Posterior cingulate gyrus (tissue), 11 donors: ENCODE measurements at regions of chr13 and their contacts with region 1.

Region 1: GRCh38 chr13:41310963-41311606 is at the start of gene NAA16:
- DNase-seq: peak; percentile 88 to 98 (median 90)

Region 2: DNA sequence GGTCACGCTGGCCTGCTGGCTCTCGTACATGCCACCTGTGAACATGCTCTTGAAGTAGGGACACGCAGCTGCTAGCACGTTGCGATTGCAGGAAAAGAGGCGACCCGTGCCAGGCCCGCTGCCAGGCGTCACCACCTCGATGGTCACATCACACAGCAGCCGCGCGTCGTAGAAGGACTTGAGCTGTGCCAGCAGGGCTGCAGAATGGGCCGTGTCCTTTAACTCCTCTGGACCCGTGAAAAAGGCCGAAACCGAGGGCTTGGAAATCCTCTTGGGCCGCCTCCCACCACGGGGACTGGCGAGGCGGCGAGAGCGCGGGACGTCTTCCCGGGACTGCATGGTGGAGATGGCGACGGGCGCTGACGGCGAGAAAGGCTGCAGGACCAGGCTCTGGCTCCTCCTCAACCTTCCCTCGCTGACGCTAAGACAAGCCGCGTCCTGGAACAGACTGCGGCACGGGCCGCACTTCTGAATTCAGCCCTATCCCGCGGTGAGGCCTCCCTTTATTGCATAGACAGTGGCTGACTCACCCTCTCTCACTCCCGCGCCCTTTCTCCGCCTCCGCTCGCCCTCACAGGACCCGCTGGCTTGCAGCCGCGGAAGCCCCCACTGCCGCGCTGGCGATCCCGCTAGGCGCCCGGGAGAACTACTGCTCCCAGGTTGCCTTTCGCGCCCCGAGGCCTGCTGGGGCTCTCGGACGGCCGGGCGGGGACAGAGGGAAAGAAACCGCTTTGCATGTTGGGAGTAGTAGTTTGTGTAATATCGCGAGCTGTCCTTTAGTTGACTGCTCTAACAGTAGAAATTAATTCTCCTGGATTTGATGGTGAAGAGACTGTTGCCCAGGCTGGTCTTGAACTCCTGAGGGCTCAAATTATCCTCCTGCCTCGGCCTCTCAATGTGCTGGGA is 116.9 kb before region 1 on chr13 and contains the start of gene KBTBD7:
- intact Hi-C with region 1: loop called (anchors 1 kb)
- DNase-seq: peak; percentile 91 to 99 (median 96)